SK-N-SH (cell line): ENCODE measurements at regions of chr17 and their contacts with region 1.

Region 1: DNA sequence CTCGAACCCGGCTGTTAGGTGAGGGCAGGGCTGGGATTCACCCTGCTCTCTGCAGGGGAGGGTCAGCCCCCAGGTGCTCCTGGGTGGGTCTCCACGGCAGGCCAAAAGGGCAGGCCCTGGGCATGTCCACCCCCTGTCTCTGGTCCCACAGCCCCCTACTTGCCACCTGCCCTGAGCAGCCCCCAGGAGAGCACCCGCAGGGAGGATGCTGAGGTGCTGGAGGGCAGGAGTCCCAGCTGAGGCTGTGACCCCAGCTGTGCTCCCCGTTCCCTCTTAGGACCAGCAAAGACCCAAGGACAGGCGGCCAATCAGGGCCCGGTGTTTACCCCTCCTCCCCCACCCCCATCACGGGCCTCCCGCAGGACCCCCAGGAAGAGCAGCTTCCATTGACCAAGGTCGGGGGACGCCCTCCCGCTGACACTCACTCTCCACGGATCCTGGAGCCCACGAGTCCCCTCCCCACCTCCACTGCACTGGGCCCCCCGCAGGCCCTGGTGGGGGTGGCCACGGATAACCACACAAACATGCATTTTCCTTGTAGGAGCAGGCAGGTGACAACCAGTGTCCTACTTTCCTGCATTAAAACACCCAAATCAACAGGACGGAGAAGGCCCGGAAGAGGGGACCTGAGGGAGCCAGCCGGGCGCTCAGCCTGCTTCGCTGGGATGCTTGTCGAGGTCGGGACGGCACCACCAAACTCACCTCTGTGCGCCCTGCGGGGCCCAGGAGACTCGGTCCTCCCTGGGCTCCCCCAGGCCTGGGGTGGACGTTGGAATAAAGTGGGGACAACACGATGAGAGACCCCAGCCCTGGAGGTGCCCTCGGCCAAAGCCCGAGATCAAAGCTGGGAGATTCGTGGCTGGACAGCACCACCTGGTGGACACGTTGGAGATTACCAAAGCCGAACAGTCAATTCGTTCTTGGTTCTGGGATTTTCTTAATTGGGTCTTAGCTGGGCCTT is 22.5 kb upstream of the ENPP7 start:
- DNase-seq: peak; percentile 89
- H3K4me3 ChIP-seq: no peak overlapping the region
- H3K27ac ChIP-seq: no peak overlapping the region
- H3K4me1 ChIP-seq: no peaks in the 10 kb centered on the region
- H3K27me3 ChIP-seq: no peaks in the 10 kb centered on the region
- CTCF ChIP-seq: peak; percentile 83
- EP300 ChIP-seq: no peak
- RAD21 ChIP-seq: peak; percentile 92

Region 2: DNA sequence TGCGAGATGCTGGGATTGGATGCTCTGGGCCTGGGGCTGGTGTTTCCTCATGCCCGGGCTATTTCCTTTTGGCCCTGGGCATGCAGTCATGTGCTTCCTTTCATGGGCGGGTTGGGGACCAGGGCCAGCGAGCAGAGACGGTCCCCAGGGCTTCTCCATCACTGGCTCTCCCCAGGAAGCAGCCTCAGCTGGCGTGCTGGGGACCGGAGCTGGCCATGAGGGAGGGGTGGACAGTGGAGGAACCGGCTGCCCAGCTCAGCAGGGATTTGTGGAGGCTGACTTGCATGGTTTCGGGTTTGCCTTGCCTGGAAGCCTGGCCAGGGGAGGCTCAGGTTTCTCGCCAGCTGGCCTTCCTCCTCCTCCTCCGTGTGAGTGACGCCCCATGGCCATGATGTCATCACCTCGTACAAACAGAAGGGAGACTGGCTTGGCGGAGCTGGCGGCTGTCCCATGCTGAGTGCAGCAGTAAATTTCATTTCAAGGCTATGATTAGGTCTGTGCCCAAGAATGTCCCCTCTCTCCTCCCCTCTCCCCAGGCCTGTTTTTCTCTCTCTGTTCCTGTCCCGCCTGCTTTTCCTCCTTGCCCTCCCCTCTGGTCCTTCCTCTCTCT is 774.1 kb before region 1 on chr17:
- CTCF ChIA-PET with region 1: no interaction called
- POLR2A ChIA-PET with region 1: no interaction called
- DNase-seq: peak; percentile 86
- H3K4me3 ChIP-seq: peak overlapping the region; percentile 23 to 55
- H3K27ac ChIP-seq: peak overlapping the region; percentile 98
- H3K4me1 ChIP-seq: peaks cover 37 to 43% of the 10 kb centered on the region in 2 experiments
- H3K27me3 ChIP-seq: no peaks in the 10 kb centered on the region
- CTCF ChIP-seq: no peak
- EP300 ChIP-seq: peak in 1 of 2 experiments; percentile 66; a peak in 2 of 4 replicates
- RAD21 ChIP-seq: no peak

Region 3: DNA sequence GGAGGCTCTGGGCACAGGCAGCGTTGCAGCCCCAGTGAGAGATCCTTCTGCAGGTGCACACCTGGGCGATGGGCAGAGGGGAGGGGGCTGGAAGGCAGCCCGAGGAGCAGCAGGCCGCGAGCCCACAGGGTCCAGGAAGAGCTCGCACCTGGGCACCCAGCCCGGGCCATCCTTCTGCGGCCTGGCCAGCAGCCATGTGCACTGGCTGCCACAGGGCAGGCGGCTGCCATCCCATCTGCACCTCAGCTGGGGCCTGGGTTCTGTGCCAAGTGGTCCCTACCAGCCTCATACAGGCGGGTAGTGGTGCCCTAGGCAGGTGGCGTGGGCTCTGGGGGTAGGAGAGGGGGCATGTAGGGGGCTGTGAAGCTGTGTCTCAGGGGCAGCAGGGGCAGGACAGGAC is 294.6 kb before region 1 on chr17:
- CTCF ChIA-PET with region 1: interaction called, 12 read pairs
- POLR2A ChIA-PET with region 1: no interaction called
- DNase-seq: peak; percentile 72
- H3K4me3 ChIP-seq: no peak overlapping the region
- H3K27ac ChIP-seq: no peak overlapping the region
- H3K4me1 ChIP-seq: peaks cover 0 to 16% of the 10 kb centered on the region in 2 experiments; a peak in 1 of 4 replicates
- H3K27me3 ChIP-seq: peaks cover 53% of the 10 kb centered on the region
- CTCF ChIP-seq: no peak
- EP300 ChIP-seq: no peak
- RAD21 ChIP-seq: no peak

Region 4: DNA sequence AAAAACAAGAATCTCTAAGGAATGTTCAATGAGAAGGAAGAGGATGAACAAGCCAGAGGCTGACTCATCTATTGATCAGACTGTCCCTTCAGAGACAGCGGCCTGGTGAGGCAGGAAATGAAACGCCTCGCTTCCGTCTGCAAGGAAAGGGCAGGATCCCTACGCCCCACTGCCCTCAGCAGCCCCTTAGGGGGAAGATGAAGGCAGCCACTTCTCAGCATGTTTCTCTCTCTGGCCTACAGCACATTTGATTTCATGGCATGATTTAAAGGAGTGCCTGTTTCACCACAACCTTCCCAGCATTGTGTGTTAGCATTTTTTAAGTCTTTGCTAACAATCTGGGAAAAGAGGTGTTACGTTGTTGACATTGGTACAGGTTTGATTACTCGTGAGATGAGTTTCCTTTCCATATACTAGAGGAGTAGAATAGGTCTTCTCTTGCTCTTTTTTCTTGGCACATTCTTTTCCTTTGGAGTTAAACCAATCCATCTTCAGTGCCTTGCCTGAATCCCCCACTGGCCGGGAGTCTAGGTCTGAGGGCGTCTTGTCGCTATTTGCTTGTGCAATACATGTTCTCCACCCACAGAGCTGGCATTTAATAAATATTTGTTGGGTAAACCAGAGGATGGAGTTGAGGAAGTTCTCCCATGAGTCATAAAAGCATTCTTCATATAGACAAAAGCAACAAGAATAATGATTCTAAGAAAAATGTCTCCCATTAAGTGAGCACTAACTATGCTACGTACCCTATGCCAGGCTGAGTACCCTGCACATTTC is 144.8 kb before region 1 on chr17:
- CTCF ChIA-PET with region 1: interaction called, 13 read pairs
- POLR2A ChIA-PET with region 1: no interaction called
- DNase-seq: no peak
- H3K4me3 ChIP-seq: no peak overlapping the region
- H3K27ac ChIP-seq: no peak overlapping the region
- H3K4me1 ChIP-seq: peaks cover 0 to 17% of the 10 kb centered on the region in 2 experiments; a peak in 1 of 4 replicates
- H3K27me3 ChIP-seq: peaks cover 17% of the 10 kb centered on the region; the same call in 1 of the 2 replicates
- CTCF ChIP-seq: no peak
- EP300 ChIP-seq: no peak
- RAD21 ChIP-seq: no peak

Region 5: GRCh38 chr17:79658811-79659207 is 49.4 kb before region 1 on chr17:
- CTCF ChIA-PET with region 1: interaction called, 11 read pairs
- POLR2A ChIA-PET with region 1: no interaction called
- DNase-seq: peak; percentile 77
- H3K4me3 ChIP-seq: peak overlapping the region in 1 of 2 experiments; percentile 23; a peak in 1 of 4 replicates
- H3K27ac ChIP-seq: no peak overlapping the region
- H3K4me1 ChIP-seq: no peaks in the 10 kb centered on the region; a peak in 1 of 4 replicates
- H3K27me3 ChIP-seq: peaks cover 14% of the 10 kb centered on the region; the same call in 1 of the 2 replicates
- CTCF ChIP-seq: peak; percentile 45
- EP300 ChIP-seq: no peak
- RAD21 ChIP-seq: peak; percentile 55

Region 6: GRCh38 chr17:79695797-79696609 is 12.2 kb before region 1 on chr17:
- CTCF ChIA-PET with region 1: interaction called, 59 read pairs
- POLR2A ChIA-PET with region 1: no interaction called
- DNase-seq: peak; percentile 75
- H3K4me3 ChIP-seq: no peak overlapping the region
- H3K27ac ChIP-seq: no peak overlapping the region
- H3K4me1 ChIP-seq: peaks cover 0 to 11% of the 10 kb centered on the region in 2 experiments; a peak in 2 of 4 replicates
- H3K27me3 ChIP-seq: 0 out of 2 replicates have a peak, but pooled peaks cover 6% of the 10 kb centered on the region
- CTCF ChIP-seq: no peak
- EP300 ChIP-seq: no peak
- RAD21 ChIP-seq: no peak

Region 7: GRCh38 chr17:79721993-79722671 is 13.9 kb after region 1 on chr17:
- CTCF ChIA-PET with region 1: interaction called, 17 read pairs
- POLR2A ChIA-PET with region 1: no interaction called
- DNase-seq: peak; percentile 79
- H3K4me3 ChIP-seq: no peak overlapping the region
- H3K27ac ChIP-seq: no peak overlapping the region
- H3K4me1 ChIP-seq: peaks cover 0 to 3% of the 10 kb centered on the region in 2 experiments; a peak in 1 of 4 replicates
- H3K27me3 ChIP-seq: 0 out of 2 replicates have a peak, but pooled peaks cover 9% of the 10 kb centered on the region
- CTCF ChIP-seq: peak; percentile 49
- EP300 ChIP-seq: no peak
- RAD21 ChIP-seq: peak; percentile 79

Region 8: DNA sequence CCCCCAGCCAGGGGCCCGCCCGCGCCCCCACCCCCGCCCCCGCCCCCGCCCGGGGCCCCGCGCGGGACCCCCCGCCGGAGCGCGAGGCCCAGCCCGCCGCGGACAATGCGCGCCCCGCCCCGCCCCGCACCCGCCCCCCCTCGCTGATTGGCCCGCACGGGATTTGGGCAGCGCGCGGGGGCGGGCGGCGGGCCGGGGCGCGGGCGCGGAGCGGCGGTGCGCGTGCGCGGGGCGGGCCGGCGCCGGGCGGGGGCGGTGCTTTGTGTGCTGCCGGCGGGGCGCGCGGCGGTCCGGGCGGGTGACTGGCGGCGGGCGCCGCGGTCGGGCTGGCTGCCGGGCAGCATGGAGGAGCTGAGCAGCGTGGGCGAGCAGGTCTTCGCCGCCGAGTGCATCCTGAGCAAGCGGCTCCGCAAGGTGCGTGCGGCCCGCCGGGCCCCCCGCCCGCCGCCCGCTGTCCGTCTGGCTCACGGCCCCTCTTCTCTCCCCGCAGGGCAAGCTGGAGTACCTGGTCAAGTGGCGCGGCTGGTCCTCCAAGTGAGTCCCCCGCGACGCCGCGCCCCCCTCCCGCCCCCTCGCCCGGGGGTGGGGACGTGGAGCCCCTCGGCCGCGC is 69.8 kb after region 1 on chr17 and contains the start of gene CBX2:
- CTCF ChIA-PET with region 1: no interaction called
- POLR2A ChIA-PET with region 1: no interaction called
- DNase-seq: peak; percentile 100
- H3K4me3 ChIP-seq: peak within 1 kb of the TSS; percentile 84 to 93
- H3K27ac ChIP-seq: peak within 1 kb of the TSS; percentile 7 to 83; a peak in 2 of 4 replicates
- H3K4me1 ChIP-seq: peaks cover 0 to 20% of the 10 kb centered on the region in 2 experiments; a peak in 3 of 4 replicates
- H3K27me3 ChIP-seq: peaks cover 23% of the 10 kb centered on the region
- CTCF ChIP-seq: peak; percentile 27; the same call in 1 of the 2 replicates
- EP300 ChIP-seq: no peak
- RAD21 ChIP-seq: no peak
- polyA plus RNA-seq, gene CBX2: 19.7 and 22.4 TPM in 2 replicates